ENCODE measurements at regions of chr1 and their contacts with region 1.

Region 1: GRCh38 chr1:203754455-203754864 is 10.5 kb upstream of the LAX1 start:
- DNase-seq: peak; percentile 76
- ATAC-seq: peak; percentile 68
- H3K4me3 ChIP-seq: peak overlapping the region in 4 of 5 experiments; percentile 0 to 33 (median 20)
- H3K4me3 Mint-ChIP-seq: peak overlapping the region; percentile 67
- H3K27ac ChIP-seq: peak overlapping the region; percentile 85
- H3K27ac Mint-ChIP-seq: peak overlapping the region; percentile 96
- H3K4me1 ChIP-seq: peaks cover 35 to 41% of the 10 kb centered on the region in 2 donors
- H3K4me1 Mint-ChIP-seq: peaks cover 41% of the 10 kb centered on the region
- H3K27me3 ChIP-seq: no peaks in the 10 kb centered on the region
- H3K27me3 Mint-ChIP-seq: no peaks in the 10 kb centered on the region
- CTCF ChIP-seq: no peak

Region 2: DNA sequence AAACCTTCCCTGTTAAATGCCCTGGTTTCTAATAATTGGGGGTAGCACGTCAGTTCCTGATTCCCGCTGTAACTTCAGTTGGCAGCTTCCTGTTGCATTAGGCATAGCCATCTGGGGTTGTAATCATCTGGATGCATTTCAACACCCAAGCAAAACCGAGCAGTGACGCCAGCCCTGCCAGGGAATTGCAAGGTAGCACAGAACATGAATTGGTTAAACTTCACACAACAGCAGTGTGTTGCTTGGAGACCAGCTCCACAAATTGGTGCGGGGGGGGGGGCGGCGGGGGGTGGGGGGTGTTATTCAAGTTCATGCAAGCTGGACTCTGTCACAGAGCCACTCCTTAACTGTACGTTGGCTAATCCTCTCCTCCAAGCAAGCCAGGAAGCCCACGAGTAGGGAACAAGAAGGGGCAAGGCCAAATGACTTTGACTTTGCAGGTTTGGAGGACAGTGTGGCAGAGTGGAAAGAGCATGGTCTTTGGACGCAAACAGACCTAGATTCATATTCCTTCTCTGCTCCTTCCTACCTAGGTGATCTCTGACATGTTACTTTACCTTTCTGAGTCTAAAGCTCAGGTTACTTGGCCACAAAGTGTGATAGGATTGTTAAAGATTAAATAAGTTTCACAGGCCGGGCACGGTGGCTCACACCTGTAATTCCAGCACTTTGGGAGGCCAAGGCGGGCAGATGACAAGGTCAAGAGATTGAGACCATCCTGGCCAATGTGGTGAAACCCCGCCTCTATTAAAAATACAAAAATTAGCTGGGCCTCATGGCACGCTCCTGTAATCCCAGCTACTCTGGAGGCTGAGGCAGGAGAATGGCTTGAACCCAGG is 15.3 kb after region 1 on chr1:
- CTCF ChIA-PET with region 1: interaction called, 10 read pairs
- POLR2A ChIA-PET with region 1: interaction called, 14 read pairs
- intact Hi-C with region 1: loop called (anchors 1 kb)
- DNase-seq: no peak
- ATAC-seq: no peak
- H3K4me3 ChIP-seq: no peak overlapping the region
- H3K4me3 Mint-ChIP-seq: no peak overlapping the region
- H3K27ac ChIP-seq: no peak overlapping the region
- H3K27ac Mint-ChIP-seq: no peak overlapping the region
- H3K4me1 ChIP-seq: peaks cover 4 to 17% of the 10 kb centered on the region in 2 donors
- H3K4me1 Mint-ChIP-seq: peaks cover 22% of the 10 kb centered on the region
- H3K27me3 ChIP-seq: peaks cover 0 to 2% (median 0%) of the 10 kb centered on the region in 4 experiments
- H3K27me3 Mint-ChIP-seq: no peaks in the 10 kb centered on the region
- CTCF ChIP-seq: no peak

Region 3: DNA sequence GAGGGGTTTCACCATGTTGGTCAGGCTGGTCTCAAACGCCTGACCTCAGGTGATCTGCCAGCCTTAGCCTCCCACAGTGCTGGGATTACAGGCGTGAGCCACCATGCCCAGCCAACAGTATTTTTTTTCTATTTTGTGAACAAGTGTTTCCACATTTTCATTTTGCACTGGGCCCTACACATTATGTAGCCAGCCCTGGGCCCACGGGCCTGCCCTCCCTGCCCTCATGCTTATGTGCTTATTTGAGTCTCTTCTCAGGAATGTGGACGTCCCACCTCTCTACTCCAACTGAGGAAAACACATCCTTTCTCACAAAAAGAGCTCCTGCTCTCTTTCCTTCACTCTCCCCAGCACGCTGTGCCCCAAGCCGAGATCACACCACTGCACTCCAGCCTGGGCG is 27.5 kb after region 1 on chr1:
- CTCF ChIA-PET with region 1: no interaction called
- POLR2A ChIA-PET with region 1: no interaction called
- intact Hi-C with region 1: no loop called
- DNase-seq: no peak
- ATAC-seq: no peak
- H3K4me3 ChIP-seq: no peak overlapping the region
- H3K4me3 Mint-ChIP-seq: no peak overlapping the region
- H3K27ac ChIP-seq: no peak overlapping the region
- H3K27ac Mint-ChIP-seq: no peak overlapping the region
- H3K4me1 ChIP-seq: no peaks in the 10 kb centered on the region
- H3K4me1 Mint-ChIP-seq: no peaks in the 10 kb centered on the region
- H3K27me3 ChIP-seq: no peaks in the 10 kb centered on the region
- H3K27me3 Mint-ChIP-seq: no peaks in the 10 kb centered on the region
- CTCF ChIP-seq: no peak

Region 4: DNA sequence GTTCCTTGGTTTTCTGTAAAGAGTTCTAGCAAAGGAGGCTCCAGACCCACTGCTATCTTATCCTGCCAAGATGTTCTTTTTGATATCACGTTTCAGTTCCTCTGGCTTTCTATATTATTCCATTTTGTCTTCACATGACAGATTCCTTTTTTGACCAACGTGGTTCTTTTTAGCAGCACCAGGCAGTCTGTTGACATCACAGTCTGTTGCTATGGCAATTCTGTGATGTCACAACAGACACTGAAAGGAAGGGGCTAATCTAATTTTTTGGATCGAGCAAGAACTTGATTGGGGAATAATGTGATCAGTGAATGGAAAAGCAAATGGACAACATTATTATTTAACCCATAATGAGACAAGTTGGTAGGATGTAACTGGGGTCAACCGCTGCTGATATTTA is 523.8 kb after region 1 on chr1:
- CTCF ChIA-PET with region 1: no interaction called
- POLR2A ChIA-PET with region 1: no interaction called
- intact Hi-C with region 1: no loop called
- DNase-seq: no peak
- ATAC-seq: no peak
- H3K4me3 ChIP-seq: no peak overlapping the region
- H3K4me3 Mint-ChIP-seq: no peak overlapping the region
- H3K27ac ChIP-seq: no peak overlapping the region
- H3K27ac Mint-ChIP-seq: no peak overlapping the region
- H3K4me1 ChIP-seq: no peaks in the 10 kb centered on the region
- H3K4me1 Mint-ChIP-seq: no peaks in the 10 kb centered on the region
- H3K27me3 ChIP-seq: peaks cover 0 to 33% (median 2%) of the 10 kb centered on the region in 4 experiments
- H3K27me3 Mint-ChIP-seq: peaks cover 63% of the 10 kb centered on the region
- CTCF ChIP-seq: no peak